Ascending aorta (tissue), 2 donors: ENCODE measurements at regions of chr19 and their contacts with region 1.

Region 1: DNA sequence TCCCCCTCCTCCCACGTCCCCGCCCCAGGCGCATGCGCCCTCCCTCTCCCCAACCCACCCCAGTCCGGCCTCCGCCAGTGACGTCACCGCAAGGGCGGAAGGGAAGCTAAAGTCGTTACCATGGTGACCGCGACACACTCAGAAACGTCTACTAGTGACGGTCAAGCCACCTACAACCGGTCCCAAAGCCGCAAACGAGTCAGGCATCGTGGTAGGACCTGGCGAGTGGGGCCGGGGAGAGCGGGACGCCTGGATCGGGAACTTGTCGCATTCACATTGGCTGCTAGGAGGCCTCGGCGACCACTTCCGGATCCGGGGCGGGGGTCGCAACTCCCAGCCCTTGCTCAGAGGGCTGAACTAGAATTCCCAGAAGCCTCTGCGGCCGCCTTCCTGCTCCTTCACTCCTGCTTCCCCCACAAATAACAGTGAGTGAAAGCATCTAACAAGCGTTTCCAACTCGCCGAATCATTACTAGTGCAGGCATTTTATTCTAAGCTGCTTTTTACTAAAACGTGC is at the start of gene ZSCAN5A:
- DNase-seq: peak; percentile 87 to 98
- H3K4me3 ChIP-seq: peak within 1 kb of the TSS; percentile 72 to 86
- H3K27ac ChIP-seq: peak within 1 kb of the TSS; percentile 91 to 98
- H3K4me1 ChIP-seq: peaks cover 0 to 6% of the 10 kb centered on the region in 2 donors
- H3K27me3 ChIP-seq: no peaks in the 10 kb centered on the region
- CTCF ChIP-seq: no peak
- total RNA-seq, gene ZSCAN5A: 13.3 TPM

Region 2: GRCh38 chr19:55407800-55408532 is 906.7 kb before region 1 on chr19:
- intact Hi-C with region 1: loop called (anchors 10 kb)
- DNase-seq: peak; percentile 95 to 99
- H3K4me3 ChIP-seq: peak overlapping the region; percentile 86 to 92
- H3K27ac ChIP-seq: peak overlapping the region; percentile 96 to 99
- H3K4me1 ChIP-seq: peaks cover 11 to 13% of the 10 kb centered on the region in 2 donors
- H3K27me3 ChIP-seq: no peaks in the 10 kb centered on the region
- CTCF ChIP-seq: no peak

Region 3: GRCh38 chr19:56140583-56141416 is 173.8 kb before region 1 on chr19 and contains the start of gene ZNF444:
- intact Hi-C with region 1: loop called (anchors 1 kb)
- DNase-seq: peak; percentile 98 to 99
- H3K4me3 ChIP-seq: peak within 1 kb of the TSS; percentile 61 to 82
- H3K27ac ChIP-seq: peak within 1 kb of the TSS; percentile 82 to 93
- H3K4me1 ChIP-seq: peaks cover 0 to 15% of the 10 kb centered on the region in 2 donors
- H3K27me3 ChIP-seq: no peaks in the 10 kb centered on the region
- CTCF ChIP-seq: no peak
- total RNA-seq, gene ZNF444: 94.9 TPM

Region 4: DNA sequence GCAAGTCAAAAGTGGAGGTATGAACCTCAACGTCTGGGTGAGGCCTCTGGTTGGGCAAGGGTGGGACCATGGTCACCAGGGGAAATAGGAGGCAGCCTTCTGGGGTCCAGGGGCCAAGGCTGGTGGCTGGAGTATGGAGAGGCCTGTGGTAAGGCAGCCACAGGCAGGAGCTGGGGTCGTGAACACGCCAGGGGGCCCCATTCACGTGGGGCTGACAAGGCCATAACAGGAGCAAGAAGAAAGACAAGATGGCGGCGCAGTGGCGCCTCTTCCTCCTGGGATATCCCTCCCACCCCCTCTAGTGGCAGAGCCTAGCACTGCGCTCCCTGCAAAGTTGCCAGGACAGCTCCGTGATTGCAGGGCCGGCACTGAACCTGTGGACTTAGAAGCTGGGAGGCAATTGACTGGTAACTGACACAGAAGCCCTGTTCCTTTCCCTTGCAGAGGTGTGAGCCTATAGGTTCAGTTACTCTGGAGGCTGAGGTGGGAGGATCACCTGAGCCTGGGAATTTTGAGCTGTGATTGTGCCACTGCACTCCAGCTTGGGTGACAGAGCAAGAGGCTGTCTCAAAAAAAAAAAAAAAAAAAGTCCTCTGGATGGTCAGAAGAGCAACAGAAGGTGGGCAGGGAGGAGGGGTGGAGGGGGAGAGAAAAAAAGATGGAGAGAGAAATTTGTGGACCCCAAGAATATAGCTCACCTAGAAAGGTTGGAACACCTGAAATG is 61.8 kb before region 1 on chr19:
- intact Hi-C with region 1: no loop called
- DNase-seq: peak in 1 of 2 donors; percentile 64
- H3K4me3 ChIP-seq: no peak overlapping the region
- H3K27ac ChIP-seq: no peak overlapping the region
- H3K4me1 ChIP-seq: no peaks in the 10 kb centered on the region
- H3K27me3 ChIP-seq: no peaks in the 10 kb centered on the region
- CTCF ChIP-seq: peak; percentile 6 to 58 (median 48)

Region 5: GRCh38 chr19:56403764-56404704 is 89.4 kb after region 1 on chr19 and contains the start of gene ZNF583:
- intact Hi-C with region 1: loop called (anchors 2 kb)
- DNase-seq: peak; percentile 92 to 98
- H3K4me3 ChIP-seq: peak within 1 kb of the TSS; percentile 88 to 91
- H3K27ac ChIP-seq: peak within 1 kb of the TSS; percentile 93 to 97
- H3K4me1 ChIP-seq: peaks cover 0 to 10% of the 10 kb centered on the region in 2 donors
- H3K27me3 ChIP-seq: no peaks in the 10 kb centered on the region
- CTCF ChIP-seq: no peak
- total RNA-seq, gene ZNF583: 0.21 TPM

Region 6: GRCh38 chr19:56838909-56839651 is 524.5 kb after region 1 on chr19:
- intact Hi-C with region 1: loop called (anchors 10 kb)
- DNase-seq: peak; percentile 94 to 98
- H3K4me3 ChIP-seq: peak overlapping the region; percentile 57 to 70
- H3K27ac ChIP-seq: peak overlapping the region; percentile 86 to 95
- H3K4me1 ChIP-seq: no peaks in the 10 kb centered on the region
- H3K27me3 ChIP-seq: no peaks in the 10 kb centered on the region
- CTCF ChIP-seq: no peak

Region 7: DNA sequence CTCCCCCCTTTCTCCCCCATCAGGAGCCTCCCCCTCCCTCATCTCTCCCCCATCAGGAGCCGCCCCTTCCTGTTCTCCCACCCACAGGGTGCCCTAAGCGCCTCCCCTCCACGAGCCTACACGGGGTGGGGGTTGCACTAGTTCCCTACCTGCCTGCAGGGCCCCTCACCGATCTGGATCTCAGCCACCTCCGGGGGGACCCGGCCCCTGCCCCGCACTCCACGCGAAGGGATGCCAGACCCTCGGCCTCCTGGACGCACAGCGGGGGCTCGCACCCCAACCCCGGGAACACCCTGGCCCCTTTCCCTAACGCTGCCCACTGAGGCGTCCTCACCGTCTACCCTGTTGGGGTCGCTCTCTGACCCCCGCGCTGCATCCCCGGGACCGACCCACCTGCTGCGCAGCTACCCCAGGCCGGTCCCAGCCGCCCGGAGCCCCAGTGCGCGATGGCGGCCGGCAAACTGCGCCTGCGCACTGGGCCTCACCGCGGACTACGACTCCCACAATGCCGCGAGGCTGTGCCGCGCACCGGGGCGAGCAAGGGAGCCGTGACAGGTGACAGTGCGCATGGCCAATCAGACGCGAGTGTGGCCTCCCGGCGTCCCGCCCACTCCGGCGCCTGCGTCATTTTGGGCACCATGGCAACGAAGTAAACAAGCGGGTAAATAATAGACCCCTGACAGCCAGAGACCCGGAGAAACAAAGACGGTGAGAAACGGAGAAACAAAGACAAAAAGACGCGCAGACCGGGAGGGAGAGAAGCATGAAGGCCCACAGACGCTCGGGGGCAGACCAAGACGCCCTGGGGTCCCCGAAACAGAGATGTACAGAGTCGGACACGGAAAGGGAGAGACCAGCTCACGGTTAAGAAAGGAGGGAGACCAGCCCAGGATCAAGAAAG is 1783.4 kb after region 1 on chr19 and contains the start of gene ZSCAN18:
- intact Hi-C with region 1: loop called (anchors 2 kb)
- DNase-seq: peak; percentile 90 to 99
- H3K4me3 ChIP-seq: peak within 1 kb of the TSS; percentile 97 to 99
- H3K27ac ChIP-seq: peak within 1 kb of the TSS; percentile 97 to 98
- H3K4me1 ChIP-seq: peaks cover 0 to 9% of the 10 kb centered on the region in 2 donors
- H3K27me3 ChIP-seq: no peaks in the 10 kb centered on the region
- CTCF ChIP-seq: no peak
- total RNA-seq, gene ZSCAN18: 181 TPM